CD4-positive, alpha-beta memory T cell (primary cell): ENCODE measurements at regions of chr20 and their contacts with region 1.

Region 1: GRCh38 chr20:53939572-53940359 is 130.6 kb downstream of the BCAS1 start:
- DNase-seq: peak; percentile 50 to 60 (median 52)
- H3K4me3 ChIP-seq: no peak overlapping the region
- H3K4me3 Mint-ChIP-seq: no peak overlapping the region
- H3K27ac ChIP-seq: no peak overlapping the region
- H3K27ac Mint-ChIP-seq: peak overlapping the region in 3 of 7 donors; percentile 3 to 77 (median 18)
- H3K4me1 ChIP-seq: peaks cover 21% of the 10 kb centered on the region
- H3K4me1 Mint-ChIP-seq: peaks cover 14 to 43% (median 24%) of the 10 kb centered on the region in 4 donors
- H3K27me3 ChIP-seq: no peaks in the 10 kb centered on the region
- H3K27me3 Mint-ChIP-seq: no peaks in the 10 kb centered on the region

Region 2: DNA sequence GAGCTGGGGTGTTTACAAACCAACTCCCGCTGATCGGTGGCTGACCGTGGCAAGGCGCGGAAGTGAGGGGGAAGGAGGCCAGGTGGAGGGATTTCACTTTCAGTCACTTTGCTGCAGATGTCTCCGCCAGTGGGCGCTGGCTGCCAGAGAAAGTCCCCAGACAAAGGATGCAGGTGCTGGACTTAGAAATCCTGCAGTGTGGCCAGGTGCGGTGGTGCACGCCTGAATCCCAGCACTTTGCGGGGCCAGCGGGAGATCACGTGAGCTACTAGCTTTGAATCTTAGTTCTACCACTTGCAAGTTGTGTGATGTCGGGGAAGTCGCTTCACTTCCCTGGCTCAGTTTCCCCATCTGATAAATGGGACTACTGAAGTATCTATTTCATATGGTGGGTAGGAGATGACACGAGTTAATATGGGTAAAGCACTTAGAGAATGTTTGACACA is 526.6 kb before region 1 on chr20:
- CTCF ChIA-PET with region 1: interaction called, 11 read pairs
- POLR2A ChIA-PET with region 1: no interaction called
- intact Hi-C with region 1: no loop called
- DNase-seq: peak in 4 of 5 donors; percentile 30 to 42 (median 37)
- H3K4me3 ChIP-seq: no peak overlapping the region
- H3K4me3 Mint-ChIP-seq: peak overlapping the region in 4 of 8 donors; percentile 29 to 73 (median 52)
- H3K27ac ChIP-seq: no peak overlapping the region
- H3K27ac Mint-ChIP-seq: peak overlapping the region in 3 of 7 donors; percentile 31 to 57 (median 36)
- H3K4me1 ChIP-seq: peaks cover 3% of the 10 kb centered on the region
- H3K4me1 Mint-ChIP-seq: peaks cover 0 to 6% (median 3%) of the 10 kb centered on the region in 4 donors
- H3K27me3 ChIP-seq: no peaks in the 10 kb centered on the region
- H3K27me3 Mint-ChIP-seq: peaks cover 0 to 1% of the 10 kb centered on the region in 2 donors

Region 3: DNA sequence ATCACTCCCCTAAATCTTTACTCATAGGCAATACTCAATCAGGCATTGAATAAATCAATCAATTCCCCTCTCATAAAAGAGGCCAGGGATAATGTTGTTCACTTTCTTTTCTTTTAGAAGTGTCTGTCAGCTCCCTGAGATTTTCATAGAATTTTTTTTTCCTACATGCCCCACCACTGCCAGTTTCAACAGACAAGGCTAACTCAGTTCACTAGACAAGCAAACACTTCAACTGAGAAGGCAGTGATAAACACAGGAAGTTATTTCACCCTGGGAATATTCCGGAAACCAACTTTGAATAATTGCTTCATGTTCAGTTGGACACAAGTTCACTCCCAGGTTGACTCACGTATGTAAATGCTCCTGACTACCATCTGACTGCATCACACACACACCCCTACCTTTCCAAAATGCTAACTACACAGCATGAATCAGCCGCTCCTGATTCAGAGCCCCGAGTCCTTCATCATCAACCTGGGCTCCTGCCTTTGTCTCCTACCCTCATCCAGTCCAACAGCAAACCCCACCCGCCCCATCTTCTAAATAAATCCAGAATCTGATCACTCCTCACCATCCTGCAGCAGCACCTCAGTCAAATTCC is 13.2 kb before region 1 on chr20:
- CTCF ChIA-PET with region 1: interaction called, 17 read pairs
- POLR2A ChIA-PET with region 1: interaction called, 7 read pairs
- intact Hi-C with region 1: no loop called
- DNase-seq: no peak
- H3K4me3 ChIP-seq: no peak overlapping the region
- H3K4me3 Mint-ChIP-seq: peak overlapping the region in 2 of 8 donors; percentile 5 to 11
- H3K27ac ChIP-seq: no peak overlapping the region
- H3K27ac Mint-ChIP-seq: peak overlapping the region in 4 of 7 donors; percentile 5 to 49 (median 26)
- H3K4me1 ChIP-seq: no peaks in the 10 kb centered on the region
- H3K4me1 Mint-ChIP-seq: peaks cover 13 to 18% (median 14%) of the 10 kb centered on the region in 4 donors
- H3K27me3 ChIP-seq: no peaks in the 10 kb centered on the region
- H3K27me3 Mint-ChIP-seq: peaks cover 0 to under 1% of the 10 kb centered on the region in 2 donors